A673 (cell line): ENCODE measurements at regions of chr16 and their contacts with region 1.

Region 1: GRCh38 chr16:49701789-49702494 is 154.0 kb downstream of the ZNF423 start:
- DNase-seq: peak; percentile 99
- H3K4me3 ChIP-seq: peak overlapping the region; percentile 43
- H3K27ac ChIP-seq: peak overlapping the region; percentile 99
- H3K4me1 ChIP-seq: peaks cover 65% of the 10 kb centered on the region
- H3K27me3 ChIP-seq: no peaks in the 10 kb centered on the region
- CTCF ChIP-seq: no peak

Region 2: DNA sequence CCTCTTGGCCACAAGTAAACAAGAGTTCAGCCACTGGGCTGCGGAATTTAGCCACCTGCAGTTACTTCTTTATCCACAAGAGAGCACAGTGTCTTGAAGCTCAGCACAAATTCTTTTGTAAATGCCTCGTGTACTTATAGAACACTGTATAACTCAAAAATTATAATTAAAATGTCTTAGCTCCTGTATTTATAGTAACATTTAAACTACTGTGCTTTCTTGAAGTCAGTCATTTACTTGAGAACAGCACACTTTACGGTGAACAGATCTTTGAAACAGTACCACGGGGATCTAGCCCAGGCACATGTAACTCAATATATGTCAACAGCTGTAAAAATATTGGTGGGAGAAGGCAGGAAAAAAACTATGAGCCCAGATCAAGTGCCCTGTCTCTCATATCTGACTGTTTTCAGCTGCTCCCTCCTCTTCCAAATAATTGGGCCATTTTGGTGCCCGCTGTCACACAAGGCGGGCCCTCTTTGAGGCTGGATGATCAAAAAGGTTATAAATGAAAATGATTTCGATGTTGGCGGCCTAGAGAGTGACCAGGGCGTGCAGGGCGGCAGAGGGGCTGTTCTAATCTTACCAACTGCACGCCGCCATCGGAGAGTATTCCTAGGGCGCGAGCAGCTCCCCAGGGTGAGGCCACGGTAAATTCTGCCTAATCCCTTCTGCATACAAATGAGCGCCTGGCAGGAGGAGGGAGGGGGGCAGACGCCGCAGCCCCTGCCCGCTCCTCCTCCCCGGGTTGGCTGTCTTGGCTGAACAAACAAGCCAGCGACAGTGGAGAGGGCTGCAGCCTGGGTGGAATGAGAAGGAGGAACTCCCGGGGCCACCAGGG is 145.1 kb before region 1 on chr16:
- CTCF ChIA-PET with region 1: no interaction called
- POLR2A ChIA-PET with region 1: no interaction called
- intact Hi-C with region 1: loop called (anchors 10 kb)
- DNase-seq: peak; percentile 82
- H3K4me3 ChIP-seq: peak overlapping the region; percentile 27
- H3K27ac ChIP-seq: peak overlapping the region; percentile 74
- H3K4me1 ChIP-seq: peaks cover 45% of the 10 kb centered on the region
- H3K27me3 ChIP-seq: no peaks in the 10 kb centered on the region
- CTCF ChIP-seq: peak; percentile 80

Region 3: GRCh38 chr16:50037662-50038220 is 335.8 kb after region 1 on chr16:
- CTCF ChIA-PET with region 1: no interaction called
- POLR2A ChIA-PET with region 1: interaction called, 22 read pairs
- intact Hi-C with region 1: no loop called
- DNase-seq: peak; percentile 55
- H3K4me3 ChIP-seq: no peak overlapping the region
- H3K27ac ChIP-seq: peak overlapping the region; percentile 4
- H3K4me1 ChIP-seq: peaks cover 21% of the 10 kb centered on the region
- H3K27me3 ChIP-seq: no peaks in the 10 kb centered on the region
- CTCF ChIP-seq: no peak